GM13976 (cell line): ENCODE measurements at regions of chrX and their contacts with region 1.

Region 1: GRCh38 chrX:31590581-31591113 is 518.8 kb upstream of the FTHL17 start:
- DNase-seq: no peak
- CTCF ChIP-seq: no peak

Region 2: GRCh38 chrX:30170900-30171299 is 1419.7 kb before region 1 on chrX:
- in situ Hi-C with region 1: no loop called
- DNase-seq: no peak
- CTCF ChIP-seq: no peak

Region 3: DNA sequence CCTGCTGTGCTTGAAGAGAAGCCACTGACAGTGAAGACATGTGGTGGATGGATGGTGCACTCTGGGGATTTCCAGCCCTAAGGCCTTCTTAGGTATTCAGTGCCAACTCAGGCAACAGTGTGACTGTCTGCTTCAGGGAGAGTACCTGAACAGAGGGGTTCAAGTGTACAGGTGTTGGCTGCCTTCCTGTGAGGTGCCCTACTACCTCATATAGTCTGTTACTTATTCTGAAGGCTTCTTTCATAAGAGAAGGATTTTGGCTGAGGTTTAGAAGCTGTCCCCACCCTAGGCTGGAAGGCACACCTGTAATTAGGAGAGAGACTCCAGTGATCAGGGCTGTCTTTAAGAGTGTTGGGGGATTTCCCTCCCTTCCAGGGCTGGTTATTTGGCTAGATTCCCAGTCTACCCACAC is 520.6 kb before region 1 on chrX:
- in situ Hi-C with region 1: no loop called
- DNase-seq: peak; percentile 26
- CTCF ChIP-seq: no peak

Region 4: GRCh38 chrX:31349515-31349914 is 241.1 kb before region 1 on chrX:
- in situ Hi-C with region 1: no loop called
- DNase-seq: no peak
- CTCF ChIP-seq: no peak

Region 5: DNA sequence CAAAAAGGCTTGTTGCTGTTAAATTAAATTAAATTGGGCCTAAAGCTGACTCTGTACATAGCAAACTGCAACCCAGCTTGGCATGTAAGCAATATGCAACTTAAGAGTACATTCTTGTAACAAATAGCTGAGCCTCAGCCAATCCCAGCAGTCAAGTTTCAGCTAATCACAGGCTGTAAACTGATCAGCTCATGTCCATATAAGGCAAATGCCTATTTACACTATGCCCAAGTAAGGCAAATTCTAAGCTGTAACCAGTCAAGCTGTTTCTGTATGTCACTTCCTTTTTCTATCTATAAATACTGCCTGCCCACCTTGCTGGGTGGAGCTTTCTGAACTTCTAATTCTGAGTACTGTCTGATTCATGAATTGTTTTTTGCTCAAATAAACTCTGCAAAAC is 89.7 kb before region 1 on chrX:
- in situ Hi-C with region 1: no loop called
- DNase-seq: no peak
- CTCF ChIP-seq: no peak

Region 6: DNA sequence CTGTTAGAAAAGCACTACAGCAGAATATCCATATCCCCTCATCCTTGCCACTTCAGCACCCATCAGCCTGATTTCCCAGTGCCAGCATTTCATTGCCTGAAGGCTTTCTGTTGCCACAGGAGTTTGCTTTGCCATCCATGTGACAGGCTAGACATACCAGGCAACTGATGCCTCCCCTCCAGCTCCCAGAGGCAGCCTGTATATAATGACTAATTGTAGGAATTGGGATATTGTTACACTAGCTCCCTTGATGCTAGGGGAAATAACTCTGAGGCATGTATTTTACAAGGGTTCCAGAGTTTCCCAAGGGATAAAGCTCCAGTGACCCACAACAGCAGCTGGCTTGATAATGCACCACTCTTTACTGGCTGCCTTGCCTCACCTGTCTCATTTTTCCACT is 89.2 kb after region 1 on chrX:
- in situ Hi-C with region 1: loop called (anchors 25 kb)
- DNase-seq: no peak
- CTCF ChIP-seq: no peak